ENCODE measurements at regions of chr9 and their contacts with region 1.

Region 1: GRCh38 chr9:93003552-93004407 is 54.7 kb upstream of the SUSD3 start:
- DNase-seq: no peak
- H3K4me3 ChIP-seq: no peak overlapping the region
- CTCF ChIP-seq: peak; percentile 51

Region 2: DNA sequence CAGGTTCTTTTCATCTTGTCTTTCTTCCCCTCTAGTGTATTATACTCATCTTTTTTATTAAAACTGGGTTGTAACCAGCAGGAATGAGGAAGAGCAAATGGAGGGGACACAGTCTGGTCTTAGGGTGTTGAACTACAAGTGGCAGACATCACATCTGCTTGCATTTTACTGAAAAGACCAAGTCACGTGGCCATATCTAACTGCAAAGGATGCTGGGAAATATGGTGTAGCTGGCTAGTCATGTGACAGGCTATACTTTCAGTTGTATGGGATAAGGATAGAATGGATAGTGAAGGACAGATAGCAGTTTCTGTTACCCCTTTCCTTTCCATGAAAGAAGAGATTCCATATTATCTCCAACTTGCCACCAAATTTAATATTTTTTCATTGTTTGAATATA is 69.5 kb before region 1 on chr9:
- CTCF ChIA-PET with region 1: no interaction called
- POLR2A ChIA-PET with region 1: no interaction called
- DNase-seq: no peak
- H3K4me3 ChIP-seq: no peak overlapping the region
- CTCF ChIP-seq: no peak

Region 3: DNA sequence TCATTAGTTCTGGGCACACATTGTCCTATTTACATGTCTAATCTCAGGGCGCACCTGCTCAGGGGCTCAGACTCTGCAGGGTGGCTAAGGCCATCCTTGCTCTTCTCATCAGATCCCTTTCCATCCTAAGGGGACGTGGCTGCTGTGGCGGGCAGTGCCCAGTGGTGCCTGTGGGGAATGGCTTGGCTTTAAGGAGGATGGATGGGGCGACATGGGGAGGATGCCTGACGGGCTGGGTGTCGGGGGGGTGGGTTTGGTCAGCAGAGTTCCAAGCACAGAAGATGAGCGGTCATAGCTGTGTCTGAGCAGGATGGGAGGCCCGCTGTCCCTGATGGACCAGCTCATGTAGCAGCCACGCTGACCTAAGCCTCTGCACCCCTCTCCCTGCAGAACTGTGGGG is 13.8 kb after region 1 on chr9:
- CTCF ChIA-PET with region 1: interaction called, 18 read pairs
- POLR2A ChIA-PET with region 1: no interaction called
- DNase-seq: no peak
- H3K4me3 ChIP-seq: no peak overlapping the region
- CTCF ChIP-seq: no peak

Region 4: GRCh38 chr9:93231121-93231694 is 227.4 kb after region 1 on chr9:
- CTCF ChIA-PET with region 1: no interaction called
- POLR2A ChIA-PET with region 1: no interaction called
- DNase-seq: no peak
- H3K4me3 ChIP-seq: no peak overlapping the region
- CTCF ChIP-seq: no peak